Activated CD4-positive, alpha-beta T cell treated with anti-CD3 and anti-CD28 coated beads, Interleukin-2, amount 10 ng/mL, durations not matched to agents 24 days and 14 days (primary cell): ENCODE measurements at regions of chr14 and their contacts with region 1.

Region 1: GRCh38 chr14:73713803-73714655 is at the start of gene PNMA1:
- DNase-seq: peak; percentile 96
- H3K4me3 Mint-ChIP-seq: peak within 1 kb of the TSS; percentile 92
- H3K27ac Mint-ChIP-seq: peak within 1 kb of the TSS; percentile 93
- H3K4me1 Mint-ChIP-seq: peaks cover 27% of the 10 kb centered on the region
- H3K27me3 Mint-ChIP-seq: no peaks in the 10 kb centered on the region
- total RNA-seq, gene PNMA1: 29.7 and 30.4 TPM in 2 replicates

Region 2: GRCh38 chr14:73443758-73444157 is 270.3 kb before region 1 on chr14:
- intact Hi-C with region 1: no loop called
- DNase-seq: no peak
- H3K4me3 Mint-ChIP-seq: no peak overlapping the region
- H3K27ac Mint-ChIP-seq: no peak overlapping the region
- H3K4me1 Mint-ChIP-seq: peaks cover 4% of the 10 kb centered on the region
- H3K27me3 Mint-ChIP-seq: no peaks in the 10 kb centered on the region

Region 3: DNA sequence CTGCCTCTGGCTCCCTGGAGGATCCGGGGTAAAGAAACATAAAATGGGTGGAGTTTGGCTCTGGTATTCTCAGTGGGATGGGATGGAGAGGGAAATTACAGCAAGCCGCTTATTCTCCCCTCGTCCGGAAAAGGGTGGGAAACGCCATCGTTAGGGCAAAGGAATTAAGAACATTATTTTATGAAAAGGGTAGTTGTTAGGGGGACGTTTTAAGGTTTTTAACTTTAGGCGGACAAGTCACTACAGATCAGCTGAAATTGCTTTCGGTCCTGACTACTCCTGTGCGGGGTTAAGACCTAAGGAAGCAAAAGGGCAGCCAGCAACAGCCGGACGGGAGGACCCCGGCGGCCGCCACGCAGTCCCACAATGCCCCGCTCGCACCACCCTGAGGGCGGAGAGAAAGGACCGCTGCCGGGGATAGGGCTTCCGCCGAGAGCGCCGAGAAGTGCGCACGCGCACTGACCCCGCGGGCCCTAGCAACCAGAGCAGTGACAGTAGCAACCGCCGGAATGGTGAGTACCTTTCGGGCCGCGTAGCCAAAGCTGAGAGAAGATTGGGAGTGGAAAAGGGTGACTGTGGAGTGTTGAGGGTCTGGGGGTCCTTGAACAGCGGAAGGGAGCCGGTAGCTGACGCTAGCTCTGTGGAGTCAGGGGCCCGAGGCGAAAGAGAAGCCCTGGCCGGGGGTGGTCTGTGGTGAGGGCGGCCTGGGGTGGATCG is 69.3 kb before region 1 on chr14 and contains the start of gene DNAL1:
- intact Hi-C with region 1: loop called (anchors 2 kb)
- DNase-seq: peak; percentile 98
- H3K4me3 Mint-ChIP-seq: peak within 1 kb of the TSS; percentile 87
- H3K27ac Mint-ChIP-seq: peak within 1 kb of the TSS; percentile 71
- H3K4me1 Mint-ChIP-seq: peaks cover 12% of the 10 kb centered on the region
- H3K27me3 Mint-ChIP-seq: no peaks in the 10 kb centered on the region
- total RNA-seq, gene DNAL1: 6.6 and 6.8 TPM in 2 replicates

Region 4: GRCh38 chr14:73662487-73662943 is 51.5 kb before region 1 on chr14:
- intact Hi-C with region 1: no loop called
- DNase-seq: no peak
- H3K4me3 Mint-ChIP-seq: no peak overlapping the region
- H3K27ac Mint-ChIP-seq: no peak overlapping the region
- H3K4me1 Mint-ChIP-seq: no peaks in the 10 kb centered on the region
- H3K27me3 Mint-ChIP-seq: no peaks in the 10 kb centered on the region

Region 5: DNA sequence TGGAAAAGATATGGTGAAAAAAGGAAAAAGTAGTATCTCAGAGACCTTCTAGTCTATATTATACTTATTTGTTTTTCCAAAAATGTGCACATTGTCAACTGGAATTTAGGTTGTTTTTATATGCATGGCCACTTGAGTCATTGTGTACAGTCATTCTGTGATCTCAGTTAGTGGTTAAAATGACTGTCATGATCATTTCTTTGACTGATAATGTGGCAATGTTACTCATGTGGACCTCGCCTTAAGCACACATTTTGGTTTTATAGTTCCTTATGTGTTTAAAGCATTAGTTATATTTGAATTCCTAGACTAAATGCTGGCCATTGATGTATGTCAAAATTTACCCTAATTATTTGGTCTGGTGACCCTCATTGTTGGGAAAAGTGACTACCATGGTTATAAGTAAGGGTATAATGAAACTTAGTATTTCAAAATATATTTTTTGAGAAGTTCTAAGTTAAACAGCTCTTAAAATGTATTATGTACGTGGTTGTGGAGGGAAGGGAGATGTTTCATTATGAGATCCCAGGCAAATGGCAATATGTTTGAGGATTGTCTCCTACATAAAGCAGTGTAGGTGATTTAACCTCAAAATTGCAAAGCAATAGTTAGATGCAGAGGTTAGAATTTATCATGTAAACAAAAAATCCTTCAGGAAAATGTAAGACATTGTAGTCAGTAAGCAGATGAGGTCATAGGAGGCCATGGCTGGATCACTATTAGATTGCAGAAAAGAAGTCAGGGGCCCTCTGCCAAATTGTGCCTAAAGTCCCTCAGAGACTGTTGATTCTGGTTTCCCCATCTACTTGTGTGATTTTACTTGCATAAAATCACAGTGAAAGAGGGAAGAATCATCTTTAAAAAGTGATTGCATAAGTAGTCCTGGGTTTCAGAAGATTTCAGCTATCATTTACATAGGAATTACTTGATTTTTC is 17.3 kb before region 1 on chr14:
- intact Hi-C with region 1: loop called (anchors 1 kb)
- DNase-seq: peak; percentile 56
- H3K4me3 Mint-ChIP-seq: peak overlapping the region; percentile 69
- H3K27ac Mint-ChIP-seq: peak overlapping the region; percentile 90
- H3K4me1 Mint-ChIP-seq: peaks cover 26% of the 10 kb centered on the region
- H3K27me3 Mint-ChIP-seq: no peaks in the 10 kb centered on the region

Region 6: DNA sequence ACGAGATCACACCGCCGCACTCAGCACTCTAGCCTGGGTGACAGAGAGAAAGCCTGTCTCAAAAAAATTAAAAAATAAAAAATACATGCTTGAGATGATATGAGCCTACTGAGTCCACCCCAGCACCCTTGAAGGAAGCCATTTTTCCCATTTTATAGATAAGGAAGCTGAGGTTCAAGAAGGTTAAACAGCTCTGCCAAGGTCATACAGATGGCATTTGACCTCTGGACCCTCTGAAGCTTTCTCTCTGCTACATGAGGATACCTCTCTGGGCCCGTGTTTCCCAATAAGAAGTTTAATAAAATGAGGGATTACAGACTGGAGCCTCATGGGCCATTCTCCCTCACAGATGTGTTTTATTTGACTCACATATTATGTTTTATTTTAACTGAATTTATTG is 54.1 kb after region 1 on chr14:
- intact Hi-C with region 1: no loop called
- DNase-seq: no peak
- H3K4me3 Mint-ChIP-seq: no peak overlapping the region
- H3K27ac Mint-ChIP-seq: no peak overlapping the region
- H3K4me1 Mint-ChIP-seq: peaks cover 52% of the 10 kb centered on the region
- H3K27me3 Mint-ChIP-seq: no peaks in the 10 kb centered on the region